IMR-90 (cell line): ENCODE measurements at regions of chr17 and their contacts with region 1.

Region 1: GRCh38 chr17:31216053-31216751 is 80.8 kb downstream of the OMG start:
- DNase-seq: peak; percentile 92
- ATAC-seq: peak; percentile 65
- H3K4me3 ChIP-seq: no peak overlapping the region
- H3K27ac ChIP-seq: no peak overlapping the region
- H3K4me1 ChIP-seq: peaks cover 6% of the 10 kb centered on the region
- H3K27me3 ChIP-seq: no peaks in the 10 kb centered on the region
- CTCF ChIP-seq: peak; percentile 59
- POLR2A ChIP-seq: no peak
- RAD21 ChIP-seq: peak; percentile 59

Region 2: GRCh38 chr17:30906101-30906911 is 309.9 kb before region 1 on chr17 and contains the start of gene TEFM:
- CTCF ChIA-PET with region 1: no interaction called
- POLR2A ChIA-PET with region 1: no interaction called
- dilution Hi-C with region 1: no loop called
- in situ Hi-C with region 1: no loop called
- intact Hi-C with region 1: loop called (anchors 5 kb)
- DNase-seq: peak; percentile 92
- ATAC-seq: peak; percentile 99
- H3K4me3 ChIP-seq: peak within 1 kb of the TSS; percentile 71
- H3K27ac ChIP-seq: peak within 1 kb of the TSS; percentile 79
- H3K4me1 ChIP-seq: peaks cover 4% of the 10 kb centered on the region; the same call in 1 of the 2 replicates
- H3K27me3 ChIP-seq: no peaks in the 10 kb centered on the region
- CTCF ChIP-seq: no peak
- POLR2A ChIP-seq: peak; percentile 81
- RAD21 ChIP-seq: peak; percentile 40
- total RNA-seq, gene TEFM: 13.8 and 17.8 TPM in 2 replicates

Region 3: DNA sequence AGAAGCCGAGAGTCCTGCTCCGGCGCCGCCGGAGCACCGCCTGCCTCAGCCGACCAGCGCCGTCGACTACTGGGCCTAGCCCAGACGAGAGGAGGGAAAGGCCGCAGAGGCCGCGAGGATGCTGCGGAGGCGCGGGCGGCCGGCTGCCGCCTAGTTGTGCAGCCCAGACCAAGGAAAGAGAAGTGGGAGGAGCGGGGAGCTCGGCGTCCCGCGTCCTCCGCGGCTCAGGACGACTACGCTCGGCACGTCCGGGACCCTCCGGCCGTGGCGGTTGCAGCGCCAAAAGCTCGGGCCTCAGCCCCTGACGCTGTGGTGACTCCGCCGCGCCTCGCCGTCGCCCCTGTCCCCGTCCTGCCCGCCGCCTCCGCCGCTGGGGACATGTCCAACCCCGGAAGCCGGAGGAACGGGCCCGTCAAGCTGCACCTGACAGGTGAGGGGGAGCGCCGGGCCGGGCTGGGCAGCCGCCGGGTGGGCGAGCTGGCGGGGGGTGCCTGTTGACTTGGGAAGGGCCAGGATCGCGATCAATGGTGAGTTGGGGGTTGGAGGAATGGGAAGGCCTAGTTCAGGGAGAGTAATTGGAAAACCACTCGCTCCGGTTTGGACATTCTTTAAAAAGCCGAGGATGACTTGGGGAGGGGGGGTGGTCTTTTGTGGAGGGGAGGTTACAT is 207.7 kb before region 1 on chr17:
- CTCF ChIA-PET with region 1: interaction called, 7 read pairs
- POLR2A ChIA-PET with region 1: no interaction called
- dilution Hi-C with region 1: no loop called
- in situ Hi-C with region 1: loop called (anchors 5 kb)
- intact Hi-C with region 1: loop called (anchors 1 kb)
- DNase-seq: peak; percentile 45
- ATAC-seq: peak; percentile 75
- H3K4me3 ChIP-seq: peak overlapping the region; percentile 47
- H3K27ac ChIP-seq: 0 out of 2 replicates have a peak overlapping the region, but pooled peaks have one; percentile 0
- H3K4me1 ChIP-seq: no peaks in the 10 kb centered on the region; the same call in 1 of the 2 replicates
- H3K27me3 ChIP-seq: no peaks in the 10 kb centered on the region
- CTCF ChIP-seq: no peak
- POLR2A ChIP-seq: no peak
- RAD21 ChIP-seq: no peak

Region 4: GRCh38 chr17:31013844-31014243 is 202.4 kb before region 1 on chr17:
- CTCF ChIA-PET with region 1: interaction called, 7 read pairs
- POLR2A ChIA-PET with region 1: no interaction called
- dilution Hi-C with region 1: no loop called
- in situ Hi-C with region 1: loop called (anchors 5 kb)
- intact Hi-C with region 1: loop called (anchors 1 kb)
- DNase-seq: no peak
- ATAC-seq: no peak
- H3K4me3 ChIP-seq: no peak overlapping the region
- H3K27ac ChIP-seq: no peak overlapping the region
- H3K4me1 ChIP-seq: no peaks in the 10 kb centered on the region; the same call in 1 of the 2 replicates
- H3K27me3 ChIP-seq: no peaks in the 10 kb centered on the region
- CTCF ChIP-seq: no peak
- POLR2A ChIP-seq: no peak
- RAD21 ChIP-seq: no peak

Region 5: DNA sequence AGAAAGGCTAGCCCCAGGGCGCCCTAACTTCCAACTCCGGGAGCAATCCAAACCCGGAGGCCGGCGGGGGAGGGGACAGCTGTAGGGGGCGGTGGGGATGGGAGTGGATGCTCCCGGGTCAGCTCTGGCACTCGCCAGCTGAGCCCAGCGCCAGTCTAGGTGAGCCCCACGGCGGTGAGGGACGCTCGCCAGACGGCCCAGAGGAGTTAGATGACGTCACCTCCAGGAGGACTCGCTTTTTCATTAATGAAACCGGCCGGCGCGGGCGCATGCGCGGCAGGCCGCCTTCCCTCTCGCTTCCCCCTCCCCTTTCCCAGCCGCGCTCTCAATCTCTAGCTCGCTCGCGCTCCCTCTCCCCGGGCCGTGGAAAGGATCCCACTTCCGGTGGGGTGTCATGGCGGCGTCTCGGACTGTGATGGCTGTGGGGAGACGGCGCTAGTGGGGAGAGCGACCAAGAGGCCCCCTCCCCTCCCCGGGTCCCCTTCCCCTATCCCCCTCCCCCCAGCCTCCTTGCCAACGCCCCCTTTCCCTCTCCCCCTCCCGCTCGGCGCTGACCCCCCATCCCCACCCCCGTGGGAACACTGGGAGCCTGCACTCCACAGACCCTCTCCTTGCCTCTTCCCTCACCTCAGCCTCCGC is 121.5 kb before region 1 on chr17 and contains the start of gene NF1:
- CTCF ChIA-PET with region 1: interaction called, 3 read pairs
- POLR2A ChIA-PET with region 1: no interaction called
- dilution Hi-C with region 1: no loop called
- in situ Hi-C with region 1: no loop called
- intact Hi-C with region 1: loop called (anchors 5 kb)
- DNase-seq: peak; percentile 94
- ATAC-seq: peak; percentile 92
- H3K4me3 ChIP-seq: peak within 1 kb of the TSS; percentile 54
- H3K27ac ChIP-seq: peak within 1 kb of the TSS; percentile 95
- H3K4me1 ChIP-seq: no peaks in the 10 kb centered on the region; the same call in 1 of the 2 replicates
- H3K27me3 ChIP-seq: no peaks in the 10 kb centered on the region
- CTCF ChIP-seq: no peak
- POLR2A ChIP-seq: peak; percentile 79
- RAD21 ChIP-seq: peak; percentile 16; the same call in 1 of the 2 replicates
- total RNA-seq, gene NF1: 48.3 and 48.6 TPM in 2 replicates

Region 6: DNA sequence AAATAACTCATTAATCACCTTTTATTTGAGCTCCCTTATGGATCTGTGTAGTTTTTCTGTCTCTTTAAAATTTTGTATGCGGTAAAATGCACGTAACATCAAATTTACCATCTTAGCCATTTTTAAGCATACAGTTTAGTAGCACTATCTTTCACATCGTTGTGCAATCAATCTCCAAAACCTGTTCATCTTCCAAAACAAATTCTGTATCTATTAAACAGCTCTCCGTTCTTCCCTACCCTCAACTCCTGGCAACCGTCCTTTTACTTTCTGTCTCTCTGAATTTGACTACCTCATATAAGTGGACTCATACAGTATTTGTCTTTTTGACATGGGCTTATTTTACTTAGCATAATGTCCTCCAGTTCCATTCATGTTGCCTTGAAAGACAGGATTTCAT is 20.9 kb before region 1 on chr17:
- CTCF ChIA-PET with region 1: interaction called, 11 read pairs
- POLR2A ChIA-PET with region 1: interaction called, 4 read pairs
- dilution Hi-C with region 1: no loop called
- in situ Hi-C with region 1: no loop called
- intact Hi-C with region 1: no loop called
- DNase-seq: no peak
- ATAC-seq: no peak
- H3K4me3 ChIP-seq: no peak overlapping the region
- H3K27ac ChIP-seq: no peak overlapping the region
- H3K4me1 ChIP-seq: 0 out of 2 replicates have a peak, but pooled peaks cover under 1% of the 10 kb centered on the region
- H3K27me3 ChIP-seq: no peaks in the 10 kb centered on the region
- CTCF ChIP-seq: no peak
- POLR2A ChIP-seq: no peak
- RAD21 ChIP-seq: no peak

Region 7: DNA sequence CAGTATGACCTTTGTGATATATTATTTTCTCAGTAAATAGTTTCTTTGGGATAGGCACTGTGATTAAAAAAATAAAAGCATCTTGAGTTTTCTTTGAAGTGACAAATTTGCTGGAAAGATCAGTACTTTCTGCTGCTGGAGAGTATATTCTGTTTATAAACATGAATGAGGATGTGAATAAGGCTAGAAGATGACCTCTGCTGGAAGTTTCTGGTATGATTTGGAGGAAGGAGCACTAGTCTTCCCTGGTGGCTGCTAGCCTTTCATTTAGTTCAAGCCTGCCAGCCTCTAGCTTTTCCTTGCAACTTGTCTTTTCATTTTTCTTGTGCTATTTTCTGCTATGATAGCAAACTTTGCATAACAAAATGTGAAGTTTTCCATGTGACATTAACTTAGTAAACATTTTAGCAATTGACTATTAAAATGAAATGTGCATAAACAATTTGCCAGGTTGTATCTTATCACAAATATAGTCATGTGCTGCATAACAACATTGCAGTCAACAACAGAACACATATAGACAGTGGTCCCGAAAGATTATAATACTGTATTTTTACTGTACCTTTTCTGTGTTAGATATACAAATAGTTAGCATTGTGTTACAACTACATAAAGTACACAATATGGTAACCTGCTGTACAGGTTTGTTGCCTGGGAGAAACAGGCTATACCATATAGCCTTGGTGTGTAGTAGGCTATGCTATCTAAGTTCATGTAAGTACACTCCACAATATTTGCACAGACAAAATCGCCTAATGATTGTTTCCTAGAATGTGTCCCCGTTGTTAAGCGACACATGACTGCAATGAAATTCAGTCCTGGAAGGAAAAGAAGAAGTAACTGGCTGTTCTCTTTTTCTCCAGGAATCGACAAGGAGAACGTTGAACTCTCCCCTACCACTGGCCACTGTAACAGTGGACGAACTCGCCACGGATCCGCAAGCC is 157.2 kb after region 1 on chr17:
- CTCF ChIA-PET with region 1: no interaction called
- POLR2A ChIA-PET with region 1: no interaction called
- dilution Hi-C with region 1: no loop called
- in situ Hi-C with region 1: no loop called
- intact Hi-C with region 1: loop called (anchors 5 kb)
- DNase-seq: peak; percentile 71
- ATAC-seq: peak; percentile 83
- H3K4me3 ChIP-seq: no peak overlapping the region
- H3K27ac ChIP-seq: no peak overlapping the region
- H3K4me1 ChIP-seq: peaks cover 4% of the 10 kb centered on the region
- H3K27me3 ChIP-seq: no peaks in the 10 kb centered on the region
- CTCF ChIP-seq: peak; percentile 69
- POLR2A ChIP-seq: no peak
- RAD21 ChIP-seq: peak; percentile 69